Dorsolateral prefrontal cortex (tissue), 120 donors: ENCODE measurements at regions of chr12 and their contacts with region 1.

Region 1: DNA sequence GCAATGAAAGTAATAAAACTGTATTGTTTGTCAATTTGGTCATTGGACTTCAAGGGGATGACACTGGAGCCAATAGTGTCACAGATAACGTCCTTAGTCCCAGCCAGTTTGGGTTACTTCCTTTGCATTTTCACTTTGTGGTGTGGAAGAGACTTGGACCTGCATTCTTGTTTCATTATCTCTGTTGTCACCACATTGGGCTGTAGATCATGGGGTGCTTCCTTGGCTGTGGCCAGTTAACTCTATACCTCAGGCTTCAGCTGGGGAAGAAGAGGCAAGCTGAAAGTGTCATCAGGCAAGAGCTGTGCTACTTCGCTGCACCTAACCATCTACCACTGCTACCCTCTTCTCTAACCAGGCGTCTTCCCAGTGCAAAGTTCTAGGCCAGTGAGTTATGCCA is 15.1 kb upstream of the CISTR start:
- DNase-seq: no peak
- H3K4me3 ChIP-seq: no peak overlapping the region
- H3K27ac ChIP-seq: no peak overlapping the region
- H3K27me3 ChIP-seq: peaks cover 0 to 39% (median 8%) of the 10 kb centered on the region in 45 donors
- CTCF ChIP-seq: no peak

Region 2: GRCh38 chr12:53465679-53466078 is 301.2 kb before region 1 on chr12:
- intact Hi-C with region 1: no loop called
- DNase-seq: no peak
- H3K4me3 ChIP-seq: no peak overlapping the region
- H3K27ac ChIP-seq: peak overlapping the region in 10 of 59 donors; percentile 1 to 43 (median 15)
- H3K27me3 ChIP-seq: no peaks in the 10 kb centered on the region
- CTCF ChIP-seq: peak in 3 of 56 donors; percentile 5 to 20 (median 11)

Region 3: DNA sequence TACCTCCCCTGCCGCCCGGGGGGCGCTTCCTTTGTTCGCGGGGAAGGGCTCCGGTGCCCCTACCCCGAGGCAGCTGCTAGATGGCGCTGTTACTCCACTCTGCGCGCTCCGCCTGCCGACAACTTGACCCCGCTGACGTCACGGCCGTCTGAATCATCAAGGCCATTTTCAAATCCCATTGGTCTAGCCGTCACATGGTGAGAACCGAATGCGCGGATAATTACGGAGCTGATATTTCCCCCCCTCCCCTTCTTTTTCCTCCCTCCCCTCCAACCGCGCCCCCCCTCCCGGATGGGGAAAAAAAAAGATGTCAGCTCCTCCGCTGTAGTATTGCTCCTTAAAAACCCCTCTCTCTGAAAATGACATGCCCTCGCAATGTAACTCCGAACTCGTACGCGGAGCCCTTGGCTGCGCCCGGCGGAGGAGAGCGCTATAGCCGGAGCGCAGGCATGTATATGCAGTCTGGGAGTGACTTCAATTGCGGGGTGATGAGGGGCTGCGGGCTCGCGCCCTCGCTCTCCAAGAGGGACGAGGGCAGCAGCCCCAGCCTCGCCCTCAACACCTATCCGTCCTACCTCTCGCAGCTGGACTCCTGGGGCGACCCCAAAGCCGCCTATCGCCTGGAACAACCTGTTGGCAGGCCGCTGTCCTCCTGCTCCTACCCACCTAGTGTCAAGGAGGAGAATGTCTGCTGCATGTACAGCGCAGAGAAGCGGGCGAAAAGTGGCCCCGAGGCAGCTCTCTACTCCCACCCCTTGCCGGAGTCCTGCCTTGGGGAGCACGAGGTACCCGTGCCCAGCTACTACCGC is 218.2 kb after region 1 on chr12 and contains the start of gene HOXC10:
- intact Hi-C with region 1: loop called (anchors 5 to 10 kb)
- DNase-seq: peak in 5 of 10 donors; percentile 41 to 70 (median 44)
- H3K4me3 ChIP-seq: peak within 1 kb of the TSS in 13 of 59 donors; percentile 5 to 36 (median 20)
- H3K27ac ChIP-seq: no peak within 1 kb of the TSS
- H3K27me3 ChIP-seq: peaks cover 24 to 100% (median 98%) of the 10 kb centered on the region in 45 donors
- CTCF ChIP-seq: peak in 30 of 56 donors; percentile 9 to 48 (median 27)
- total RNA-seq, gene HOXC10: 0.34 TPM in 1 of 120 experiments, not detected in the others